Activated CD4-positive, alpha-beta T cell treated with anti-CD3 and anti-CD28 coated beads for 36 hours (primary cell): ENCODE measurements at regions of chr5 and their contacts with region 1.

Region 1: DNA sequence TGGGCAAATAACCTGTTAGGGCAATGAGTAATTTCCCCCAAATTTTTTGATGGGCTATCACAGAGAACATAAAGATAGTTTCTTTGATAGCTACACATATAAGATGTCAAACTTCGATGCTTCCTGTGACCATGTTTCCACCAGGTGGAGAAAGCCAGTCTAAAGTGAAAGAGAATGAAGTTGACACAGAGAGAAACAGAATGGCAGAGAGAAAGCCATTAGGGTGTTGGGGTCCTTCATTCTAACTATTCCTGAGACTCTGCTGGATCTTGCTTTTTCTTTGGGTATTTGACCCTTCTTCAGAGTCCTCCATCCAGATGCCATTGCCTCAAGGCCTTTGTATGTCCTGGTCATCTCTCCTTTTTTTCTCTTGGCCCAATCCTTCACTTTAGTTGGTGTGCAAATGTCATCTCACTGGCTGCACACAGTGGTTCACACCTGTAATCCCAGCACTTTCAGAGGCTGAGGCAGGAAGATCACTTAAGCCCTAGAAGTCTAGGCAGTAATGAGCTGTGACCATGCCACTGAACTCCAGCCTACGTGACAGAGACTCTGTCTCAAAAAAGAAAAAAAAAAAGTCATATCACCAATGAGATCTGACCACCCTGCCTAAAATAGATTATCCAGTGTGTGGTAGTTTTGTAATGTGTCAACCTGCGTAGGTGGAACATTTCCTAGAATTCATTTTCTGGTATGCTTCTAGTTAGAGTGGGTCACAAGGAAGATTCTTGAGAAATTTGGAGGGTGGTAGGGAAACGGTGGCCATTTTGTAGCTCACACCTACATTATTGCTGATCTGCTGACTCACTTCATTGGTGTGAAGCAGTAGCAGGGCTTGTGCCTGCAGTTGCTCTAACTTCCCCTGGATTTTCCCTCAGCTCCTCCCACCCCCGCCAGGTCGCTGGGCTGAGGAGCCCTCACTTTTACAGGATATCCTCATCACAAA is 20.8 kb upstream of the KIF2A start:
- DNase-seq: peak; percentile 84
- ATAC-seq: peak; percentile 84
- H3K4me3 Mint-ChIP-seq: peak overlapping the region; percentile 35
- H3K27ac Mint-ChIP-seq: peak overlapping the region; percentile 96
- H3K4me1 Mint-ChIP-seq: peaks cover 79% of the 10 kb centered on the region
- H3K27me3 Mint-ChIP-seq: no peaks in the 10 kb centered on the region

Region 2: DNA sequence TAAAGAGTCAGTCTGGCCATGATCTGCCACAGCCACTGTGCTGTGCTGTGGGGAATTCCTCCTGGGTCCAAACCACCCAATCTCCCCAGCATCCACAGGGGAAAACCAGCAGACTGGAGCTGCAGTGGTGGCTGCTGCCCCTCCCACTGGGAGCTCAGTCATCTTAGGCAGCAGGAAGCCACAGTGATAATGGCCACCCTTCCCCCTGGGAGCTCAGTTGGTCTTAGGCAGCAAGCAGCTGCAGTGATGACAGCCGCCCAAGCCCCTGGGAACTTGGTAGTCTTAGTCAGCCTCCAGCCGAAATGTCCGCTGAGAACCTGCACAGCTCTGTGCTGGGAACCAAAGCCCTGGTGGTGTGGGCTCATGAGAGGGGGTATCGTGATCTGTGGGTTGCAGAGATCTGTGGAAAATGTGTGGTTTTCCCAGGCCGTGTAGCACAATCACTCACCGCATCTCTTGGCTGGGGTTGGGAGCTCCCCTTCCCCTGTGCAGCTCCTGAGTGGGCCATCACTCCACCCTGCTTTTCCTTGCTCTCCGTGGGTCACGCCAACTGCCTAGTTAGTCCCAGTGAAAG is 1084.5 kb before region 1 on chr5:
- CTCF ChIA-PET with region 1: no interaction called
- POLR2A ChIA-PET with region 1: no interaction called
- intact Hi-C with region 1: loop called in 1 of 2 experiments (anchors 10 kb)
- DNase-seq: no peak
- ATAC-seq: no peak
- H3K4me3 Mint-ChIP-seq: no peak overlapping the region
- H3K27ac Mint-ChIP-seq: no peak overlapping the region
- H3K4me1 Mint-ChIP-seq: peaks cover 14% of the 10 kb centered on the region
- H3K27me3 Mint-ChIP-seq: peaks cover 39% of the 10 kb centered on the region

Region 3: GRCh38 chr5:62256161-62257019 is 28.8 kb before region 1 on chr5:
- CTCF ChIA-PET with region 1: interaction called, 8 read pairs
- POLR2A ChIA-PET with region 1: no interaction called
- intact Hi-C with region 1: loop called (anchors 1 to 2 kb)
- DNase-seq: peak; percentile 38
- ATAC-seq: peak; percentile 73
- H3K4me3 Mint-ChIP-seq: peak overlapping the region; percentile 37
- H3K27ac Mint-ChIP-seq: peak overlapping the region; percentile 93
- H3K4me1 Mint-ChIP-seq: peaks cover 84% of the 10 kb centered on the region
- H3K27me3 Mint-ChIP-seq: no peaks in the 10 kb centered on the region

Region 4: GRCh38 chr5:62331921-62332320 is 46.7 kb after region 1 on chr5:
- CTCF ChIA-PET with region 1: interaction called, 4 read pairs
- POLR2A ChIA-PET with region 1: interaction called, 3 read pairs
- intact Hi-C with region 1: loop called in 1 of 2 experiments (anchors 2 kb)
- DNase-seq: no peak
- ATAC-seq: no peak
- H3K4me3 Mint-ChIP-seq: no peak overlapping the region
- H3K27ac Mint-ChIP-seq: peak overlapping the region; percentile 13
- H3K4me1 Mint-ChIP-seq: peaks cover 63% of the 10 kb centered on the region
- H3K27me3 Mint-ChIP-seq: no peaks in the 10 kb centered on the region

Region 5: DNA sequence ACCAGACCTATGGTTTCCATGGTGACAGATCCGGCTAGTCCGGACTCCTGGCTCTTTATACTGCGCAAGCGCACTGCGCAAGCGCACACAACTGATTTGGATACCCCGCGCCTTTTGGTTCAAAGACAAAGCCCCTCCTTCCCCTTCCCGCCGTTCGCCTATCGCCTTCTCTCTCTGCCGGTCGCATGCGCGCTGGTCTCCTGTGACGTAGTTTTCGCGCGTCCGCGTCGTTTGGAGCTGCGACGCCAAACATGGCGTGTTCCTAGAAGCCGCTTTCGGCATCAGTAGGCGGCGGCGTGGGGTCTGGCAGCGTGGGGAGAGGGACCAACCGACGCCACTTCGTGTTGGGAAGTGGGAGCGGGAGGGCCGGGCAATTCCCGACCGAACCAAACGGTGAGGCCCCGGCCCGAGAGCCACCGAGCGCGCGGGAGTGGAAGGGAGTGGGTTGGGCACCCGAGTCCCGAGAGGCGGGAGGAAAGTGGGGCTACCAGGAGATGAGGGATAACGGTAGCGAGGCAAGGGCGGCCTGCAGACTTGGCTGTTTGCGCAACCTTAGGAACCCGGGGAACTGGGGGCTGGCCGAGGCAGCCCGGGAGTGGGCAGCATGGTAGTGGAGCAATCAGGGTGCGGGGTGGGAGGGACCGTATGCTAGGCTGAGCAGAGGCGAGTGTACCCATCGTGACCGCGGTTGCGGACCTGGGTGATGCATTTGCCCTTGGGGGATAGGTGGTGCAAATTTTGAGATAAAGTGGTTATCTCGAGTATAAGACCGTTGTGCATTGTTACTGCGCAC is 127.5 kb after region 1 on chr5 and contains the start of gene IPO11:
- CTCF ChIA-PET with region 1: no interaction called
- POLR2A ChIA-PET with region 1: no interaction called
- intact Hi-C with region 1: loop called in 1 of 2 experiments (anchors 1 kb)
- DNase-seq: peak; percentile 99
- ATAC-seq: peak; percentile 99
- H3K4me3 Mint-ChIP-seq: peak within 1 kb of the TSS; percentile 90
- H3K27ac Mint-ChIP-seq: peak within 1 kb of the TSS; percentile 85
- H3K4me1 Mint-ChIP-seq: peaks cover 25% of the 10 kb centered on the region
- H3K27me3 Mint-ChIP-seq: no peaks in the 10 kb centered on the region
- total RNA-seq, gene IPO11: 57.2 to 69.9 TPM